Sigmoid colon (tissue), 7 donors: ENCODE measurements at regions of chrX and their contacts with region 1.

Region 1: DNA sequence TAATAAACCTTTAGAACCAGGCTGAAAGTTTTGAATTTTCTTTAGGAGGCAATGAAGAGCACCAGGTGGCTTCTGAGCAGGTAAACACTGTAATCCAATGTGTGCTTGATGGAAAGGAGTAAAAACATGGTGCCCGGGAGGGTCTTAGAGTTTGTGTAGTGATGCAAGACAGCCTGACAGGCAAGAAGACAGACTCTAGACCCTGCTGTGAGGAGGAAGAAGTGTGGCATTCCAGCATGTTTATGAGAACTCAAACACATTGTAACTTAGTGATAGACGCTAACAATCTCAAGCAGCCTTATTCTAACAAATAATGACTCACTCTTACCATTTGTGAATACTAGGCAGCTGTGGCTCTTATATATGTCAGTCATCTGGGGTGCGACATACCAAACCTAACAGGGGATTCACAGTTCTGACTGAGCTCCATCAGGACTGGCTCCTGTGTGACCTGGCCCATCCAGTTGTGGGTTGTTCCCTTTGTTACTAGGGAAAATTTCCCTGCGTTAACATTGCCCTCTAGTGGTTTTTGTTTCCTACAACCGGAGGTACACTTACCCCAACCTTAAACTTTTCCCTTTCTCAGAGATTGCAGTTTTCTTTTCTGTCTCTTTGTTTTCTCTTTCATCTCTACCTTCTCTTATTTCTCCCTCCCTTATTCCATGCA is 53.8 kb downstream of the VSIG4 start:
- DNase-seq: no peak
- H3K4me3 ChIP-seq: no peak overlapping the region
- H3K27ac ChIP-seq: no peak overlapping the region
- H3K4me1 ChIP-seq: no peaks in the 10 kb centered on the region
- H3K27me3 ChIP-seq: no peaks in the 10 kb centered on the region
- CTCF ChIP-seq: peak; percentile 27 to 44 (median 34)
- EP300 ChIP-seq: no peak
- POLR2A ChIP-seq: no peak

Region 2: DNA sequence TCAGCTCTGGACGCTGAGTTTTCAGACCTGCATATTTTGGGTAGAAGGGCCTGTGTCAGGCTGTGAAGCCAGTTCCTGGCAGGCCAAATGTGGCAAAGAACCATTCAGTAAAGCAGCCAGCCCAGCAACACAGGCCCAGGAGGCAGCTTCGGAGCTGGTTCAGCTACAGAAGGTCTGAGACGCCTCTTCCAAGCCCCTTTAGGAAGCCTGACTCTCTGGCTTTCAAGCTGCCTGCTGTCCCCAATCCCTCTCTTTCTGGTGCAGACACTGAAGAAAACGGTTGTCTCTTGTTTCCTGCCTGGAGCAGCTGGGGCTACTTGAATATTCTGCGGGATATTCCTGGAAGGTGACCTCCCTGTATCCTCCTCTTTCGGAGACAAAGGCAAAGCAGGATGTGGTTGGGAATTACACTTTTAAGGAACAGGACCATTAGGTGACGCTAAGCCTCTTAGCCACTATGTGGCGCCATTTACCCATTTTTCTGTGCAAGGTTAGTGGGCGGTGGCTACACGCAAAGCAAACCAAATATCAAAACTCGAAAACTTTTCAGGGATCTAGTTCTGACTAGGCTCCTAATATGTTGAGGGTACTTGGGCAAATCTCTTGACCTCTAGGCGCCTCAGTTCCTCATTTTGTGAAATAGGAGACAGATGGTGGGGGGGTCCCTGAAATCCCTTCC is 404.3 kb before region 1 on chrX:
- intact Hi-C with region 1: loop called (anchors 1 kb)
- DNase-seq: peak; percentile 74
- H3K4me3 ChIP-seq: no peak overlapping the region
- H3K27ac ChIP-seq: no peak overlapping the region
- H3K4me1 ChIP-seq: no peaks in the 10 kb centered on the region
- H3K27me3 ChIP-seq: no peaks in the 10 kb centered on the region
- CTCF ChIP-seq: peak; percentile 46 to 64 (median 57)
- EP300 ChIP-seq: no peak
- POLR2A ChIP-seq: no peak

Region 3: DNA sequence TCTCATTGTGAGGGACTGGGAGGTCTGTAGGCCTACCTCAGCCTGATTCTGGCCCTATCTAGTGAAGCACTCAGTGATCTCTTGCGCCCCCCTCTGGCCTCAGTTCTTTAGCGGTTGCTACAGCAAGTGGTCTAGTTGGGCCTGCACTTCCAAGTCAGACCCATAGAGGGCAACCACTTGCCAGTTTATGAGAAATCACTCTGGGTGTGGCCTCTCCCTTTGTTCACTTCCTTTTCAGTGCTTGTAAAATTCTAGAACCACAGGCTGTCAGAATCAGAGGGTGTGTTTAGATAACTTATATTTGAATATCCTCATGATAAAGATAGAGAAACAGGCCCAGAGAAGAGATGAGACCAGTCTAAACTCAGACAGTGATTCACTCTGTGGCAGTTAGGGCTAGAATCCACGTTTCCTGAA is 390.6 kb before region 1 on chrX:
- intact Hi-C with region 1: loop called (anchors 5 kb)
- DNase-seq: peak; percentile 97
- H3K4me3 ChIP-seq: no peak overlapping the region
- H3K27ac ChIP-seq: peak overlapping the region; percentile 74 to 78 (median 76)
- H3K4me1 ChIP-seq: peaks cover 0 to 10% (median 4%) of the 10 kb centered on the region in 4 donors
- H3K27me3 ChIP-seq: no peaks in the 10 kb centered on the region
- CTCF ChIP-seq: peak; percentile 89 to 99 (median 97)
- EP300 ChIP-seq: no peak
- POLR2A ChIP-seq: no peak

Region 4: GRCh38 chrX:65744965-65745364 is 241.1 kb before region 1 on chrX:
- intact Hi-C with region 1: loop called (anchors 5 kb)
- DNase-seq: no peak
- H3K4me3 ChIP-seq: no peak overlapping the region
- H3K27ac ChIP-seq: no peak overlapping the region
- H3K4me1 ChIP-seq: no peaks in the 10 kb centered on the region
- H3K27me3 ChIP-seq: no peaks in the 10 kb centered on the region
- CTCF ChIP-seq: no peak
- EP300 ChIP-seq: no peak
- POLR2A ChIP-seq: no peak